Activated CD4-positive, alpha-beta T cell treated with anti-CD3 and anti-CD28 coated beads, Interleukin-2, amount 10 ng/mL, durations not matched to agents 24 days and 14 days (primary cell): ENCODE measurements at regions of chr17 and their contacts with region 1.

Region 1: GRCh38 chr17:29148790-29149430 is 31.3 kb downstream of the MYO18A start:
- DNase-seq: peak; percentile 99
- H3K4me3 Mint-ChIP-seq: peak overlapping the region; percentile 77
- H3K27ac Mint-ChIP-seq: peak overlapping the region; percentile 81
- H3K4me1 Mint-ChIP-seq: peaks cover 49% of the 10 kb centered on the region
- H3K27me3 Mint-ChIP-seq: no peaks in the 10 kb centered on the region

Region 2: DNA sequence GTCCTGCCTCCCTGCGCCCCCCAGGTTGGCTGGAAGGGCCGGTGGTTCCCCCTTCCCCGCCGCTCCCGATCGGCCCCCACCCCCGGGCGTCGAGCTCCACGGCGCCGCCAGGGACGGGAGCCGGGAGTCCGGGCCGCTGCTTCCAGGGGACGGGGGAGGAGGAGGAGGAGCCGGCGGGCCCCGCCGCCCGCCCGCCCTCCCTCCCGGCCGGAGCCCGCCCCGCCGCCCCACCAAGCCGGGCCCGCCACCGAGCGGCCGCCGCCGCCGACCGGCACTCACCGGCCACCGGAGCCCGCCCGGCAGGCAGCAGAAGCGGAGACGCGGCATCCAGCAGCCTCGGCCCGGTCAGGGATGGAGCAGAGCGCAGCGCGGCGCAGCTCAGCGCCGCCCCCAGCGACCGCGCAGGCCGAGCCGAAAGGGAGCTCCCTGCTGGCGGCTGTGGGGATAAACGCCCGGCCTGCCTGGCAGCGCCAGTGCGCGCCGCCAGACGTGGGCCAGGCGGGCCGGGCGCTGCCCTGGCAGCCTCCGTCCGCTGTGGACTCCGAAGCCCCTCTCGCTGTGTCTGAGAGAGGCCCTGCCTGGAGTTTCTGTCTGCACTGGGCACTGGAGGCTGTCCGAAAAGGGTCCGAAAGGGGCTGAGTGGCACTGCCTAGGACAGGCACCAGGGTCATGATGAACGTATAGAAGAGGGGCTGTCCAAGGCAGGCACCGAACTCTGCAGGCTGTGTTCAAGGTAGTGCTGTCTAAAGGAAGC is 31.3 kb after region 1 on chr17 and contains the start of gene MYO18A:
- intact Hi-C with region 1: loop called (anchors 1 kb)
- DNase-seq: peak; percentile 95
- H3K4me3 Mint-ChIP-seq: peak within 1 kb of the TSS; percentile 65
- H3K27ac Mint-ChIP-seq: no peak within 1 kb of the TSS
- H3K4me1 Mint-ChIP-seq: peaks cover 28% of the 10 kb centered on the region
- H3K27me3 Mint-ChIP-seq: peaks cover 19% of the 10 kb centered on the region
- total RNA-seq, gene MYO18A: 36.6 and 37.9 TPM in 2 replicates

Region 3: GRCh38 chr17:29219378-29220047 is 70.6 kb after region 1 on chr17:
- intact Hi-C with region 1: loop called (anchors 1 kb)
- DNase-seq: peak; percentile 92
- H3K4me3 Mint-ChIP-seq: no peak overlapping the region
- H3K27ac Mint-ChIP-seq: no peak overlapping the region
- H3K4me1 Mint-ChIP-seq: peaks cover 4% of the 10 kb centered on the region
- H3K27me3 Mint-ChIP-seq: peaks cover 5% of the 10 kb centered on the region

Region 4: GRCh38 chr17:29293890-29294579 is 145.1 kb after region 1 on chr17 and contains the start of gene NUFIP2:
- intact Hi-C with region 1: loop called (anchors 1 kb)
- DNase-seq: peak; percentile 99
- H3K4me3 Mint-ChIP-seq: peak within 1 kb of the TSS; percentile 99
- H3K27ac Mint-ChIP-seq: peak within 1 kb of the TSS; percentile 99
- H3K4me1 Mint-ChIP-seq: peaks cover 28% of the 10 kb centered on the region
- H3K27me3 Mint-ChIP-seq: no peaks in the 10 kb centered on the region
- total RNA-seq, gene NUFIP2: 83.2 and 89.7 TPM in 2 replicates